ENCODE measurements at regions of chr15 and their contacts with region 1.

Region 1: DNA sequence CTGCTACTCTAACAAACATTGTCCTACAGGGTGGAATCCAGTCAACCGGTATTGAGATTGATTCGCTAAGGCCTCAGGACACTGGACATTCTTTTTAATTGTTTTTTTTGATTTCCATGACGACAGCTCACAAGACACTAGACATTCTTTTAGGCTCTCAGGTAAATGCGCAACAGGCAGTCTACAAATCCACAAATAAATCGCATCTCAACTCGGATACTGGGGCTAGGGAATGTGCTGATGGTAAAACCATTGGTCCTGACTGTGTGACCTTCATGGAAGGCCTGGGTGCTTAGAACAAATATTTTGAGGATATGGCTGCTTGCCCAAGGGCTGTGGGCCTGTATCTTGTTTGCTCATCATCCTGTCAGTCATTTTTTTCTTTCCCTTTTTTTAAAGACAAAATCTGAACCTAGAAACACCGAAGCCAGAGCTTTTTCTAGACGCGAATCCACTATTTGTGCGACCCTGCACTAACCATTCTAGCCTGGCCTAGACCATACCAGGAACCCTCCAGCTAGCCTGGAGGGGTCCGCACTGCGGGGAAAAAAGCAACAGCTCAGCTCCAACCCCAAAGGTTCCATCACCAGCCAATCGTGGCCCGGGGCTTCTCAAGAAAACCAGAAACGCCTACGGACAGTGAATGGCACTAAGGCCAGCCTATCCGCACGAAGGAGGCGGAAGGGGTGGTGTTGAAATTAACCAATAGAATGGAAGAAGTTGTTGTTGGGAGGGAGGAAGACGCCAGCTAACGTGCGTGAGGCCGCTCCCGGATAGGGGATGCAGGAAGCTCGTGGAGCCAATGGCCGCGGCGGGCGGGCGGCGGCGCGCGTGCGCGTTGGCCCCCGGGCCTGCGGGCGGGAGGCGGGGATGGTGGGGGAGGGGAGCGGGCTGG is 18.1 kb upstream of the CHD2 start:
- DNase-seq: peak; percentile 99
- H3K4me3 Mint-ChIP-seq: peak overlapping the region; percentile 96
- H3K27ac Mint-ChIP-seq: peak overlapping the region; percentile 97
- H3K4me1 Mint-ChIP-seq: peaks cover 43% of the 10 kb centered on the region
- H3K27me3 Mint-ChIP-seq: no peaks in the 10 kb centered on the region

Region 2: GRCh38 chr15:92803847-92804609 is 78.0 kb before region 1 on chr15:
- CTCF ChIA-PET with region 1: interaction called, 79 read pairs
- POLR2A ChIA-PET with region 1: interaction called, 295 read pairs
- intact Hi-C with region 1: loop called (anchors 1 kb)
- DNase-seq: peak; percentile 94
- H3K4me3 Mint-ChIP-seq: peak overlapping the region; percentile 10
- H3K27ac Mint-ChIP-seq: peak overlapping the region; percentile 88
- H3K4me1 Mint-ChIP-seq: peaks cover 36% of the 10 kb centered on the region
- H3K27me3 Mint-ChIP-seq: no peaks in the 10 kb centered on the region

Region 3: DNA sequence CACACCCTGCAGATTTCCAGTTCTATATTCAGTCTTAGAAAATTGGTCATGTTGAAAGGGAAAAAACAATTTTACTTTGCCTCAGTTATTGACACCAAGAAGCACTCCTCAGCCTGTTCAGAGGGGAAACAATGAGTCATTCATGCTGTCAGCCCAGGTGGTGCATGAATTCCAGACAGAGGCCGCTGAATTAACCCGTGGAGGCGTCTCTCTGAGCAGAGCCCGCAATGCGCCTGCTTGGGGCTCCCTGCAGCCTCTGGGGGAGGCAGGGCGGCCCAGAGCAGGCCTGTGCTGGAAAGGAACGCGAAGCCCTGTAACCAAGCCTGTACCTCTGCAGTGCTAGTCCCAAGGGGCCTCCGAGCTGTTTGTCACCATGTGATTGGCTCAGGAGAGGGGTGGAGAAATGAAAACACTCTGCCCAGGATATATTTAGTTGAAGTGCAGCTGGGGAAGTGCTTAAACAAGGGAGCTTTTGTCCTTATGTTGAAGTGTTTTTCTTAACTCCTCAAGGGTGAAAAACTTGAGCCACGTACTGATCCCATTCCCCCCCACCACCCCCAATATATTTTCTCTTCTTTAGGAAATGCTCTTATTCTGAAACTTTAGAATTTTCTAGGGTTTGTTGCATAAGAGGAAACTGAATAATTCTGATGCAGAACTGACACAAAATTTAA is 50.3 kb before region 1 on chr15:
- CTCF ChIA-PET with region 1: interaction called, 15 read pairs
- POLR2A ChIA-PET with region 1: interaction called, 171 read pairs
- intact Hi-C with region 1: loop called (anchors 1 kb)
- DNase-seq: peak; percentile 95
- H3K4me3 Mint-ChIP-seq: peak overlapping the region; percentile 70
- H3K27ac Mint-ChIP-seq: peak overlapping the region; percentile 99
- H3K4me1 Mint-ChIP-seq: peaks cover 52% of the 10 kb centered on the region
- H3K27me3 Mint-ChIP-seq: peaks cover 2% of the 10 kb centered on the region

Region 4: DNA sequence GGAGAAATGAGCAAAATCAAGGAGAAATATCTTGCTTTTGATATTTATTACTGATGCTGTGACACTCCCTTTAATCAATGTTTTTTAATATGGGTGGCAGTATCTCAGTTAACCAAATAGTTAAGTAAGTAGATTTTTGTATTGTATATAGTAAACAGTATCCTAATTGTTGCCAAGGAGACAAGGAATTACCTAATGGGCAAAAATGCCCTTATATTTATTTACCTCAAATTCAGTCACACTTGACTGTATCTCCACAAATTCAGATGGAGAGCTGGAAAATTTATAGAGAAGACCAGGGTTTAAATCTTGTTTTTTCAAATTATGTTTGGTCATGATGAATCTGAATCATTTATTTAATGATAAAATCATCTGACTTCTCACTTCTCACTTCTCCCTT is 14.5 kb after region 1 on chr15:
- CTCF ChIA-PET with region 1: interaction called, 69 read pairs
- POLR2A ChIA-PET with region 1: interaction called, 733 read pairs
- intact Hi-C with region 1: loop called (anchors 1 kb)
- DNase-seq: no peak
- H3K4me3 Mint-ChIP-seq: peak overlapping the region; percentile 18
- H3K27ac Mint-ChIP-seq: peak overlapping the region; percentile 62
- H3K4me1 Mint-ChIP-seq: peaks cover 69% of the 10 kb centered on the region
- H3K27me3 Mint-ChIP-seq: no peaks in the 10 kb centered on the region

Region 5: DNA sequence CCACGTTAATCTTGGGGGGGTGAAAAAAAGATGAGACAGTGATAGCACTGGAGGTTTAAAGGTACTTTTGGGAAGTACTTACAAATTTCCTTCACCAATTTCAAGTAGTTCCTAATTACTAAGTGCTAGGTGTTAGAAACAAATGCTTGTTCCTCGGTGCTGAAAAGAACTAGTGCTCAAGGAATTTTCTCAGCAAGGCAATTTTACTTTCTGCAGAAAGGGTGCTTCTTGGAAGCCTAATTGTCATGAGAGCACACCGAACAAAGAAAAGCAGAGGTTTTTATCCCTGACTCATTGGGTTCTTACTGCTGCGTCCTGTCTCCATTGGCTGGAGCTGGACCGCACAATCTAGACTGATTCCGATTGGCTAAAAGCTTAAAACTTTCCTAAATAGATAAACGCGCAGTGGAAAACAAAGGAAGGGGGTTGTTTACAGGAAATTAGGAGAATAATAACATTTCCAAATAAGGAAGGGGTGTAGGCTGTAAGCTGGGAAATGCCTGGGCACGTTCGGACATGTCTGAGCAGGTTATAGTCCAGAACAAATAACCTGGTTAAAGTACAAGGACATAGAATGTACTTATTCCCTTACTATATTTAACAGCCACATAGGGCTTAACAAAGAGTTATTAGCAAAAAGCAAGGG is 67.7 kb after region 1 on chr15:
- CTCF ChIA-PET with region 1: no interaction called
- POLR2A ChIA-PET with region 1: no interaction called
- intact Hi-C with region 1: no loop called
- DNase-seq: no peak
- H3K4me3 Mint-ChIP-seq: no peak overlapping the region
- H3K27ac Mint-ChIP-seq: peak overlapping the region; percentile 45
- H3K4me1 Mint-ChIP-seq: peaks cover 4% of the 10 kb centered on the region
- H3K27me3 Mint-ChIP-seq: no peaks in the 10 kb centered on the region